Caco-2 (cell line): ENCODE measurements at regions of chr3 and their contacts with region 1.

Region 1: GRCh38 chr3:12994607-12995388 is 78.4 kb downstream of the IQSEC1 start:
- DNase-seq: peak; percentile 88 to 94
- H3K4me3 ChIP-seq: peak overlapping the region; percentile 96
- H3K4me3 Mint-ChIP-seq: peak overlapping the region; percentile 96
- H3K27ac Mint-ChIP-seq: peak overlapping the region; percentile 50
- H3K4me1 ChIP-seq: peaks cover 10% of the 10 kb centered on the region
- H3K4me1 Mint-ChIP-seq: no peaks in the 10 kb centered on the region
- H3K27me3 ChIP-seq: no peaks in the 10 kb centered on the region
- H3K27me3 Mint-ChIP-seq: no peaks in the 10 kb centered on the region
- CTCF ChIP-seq: peak; percentile 85 to 88

Region 2: DNA sequence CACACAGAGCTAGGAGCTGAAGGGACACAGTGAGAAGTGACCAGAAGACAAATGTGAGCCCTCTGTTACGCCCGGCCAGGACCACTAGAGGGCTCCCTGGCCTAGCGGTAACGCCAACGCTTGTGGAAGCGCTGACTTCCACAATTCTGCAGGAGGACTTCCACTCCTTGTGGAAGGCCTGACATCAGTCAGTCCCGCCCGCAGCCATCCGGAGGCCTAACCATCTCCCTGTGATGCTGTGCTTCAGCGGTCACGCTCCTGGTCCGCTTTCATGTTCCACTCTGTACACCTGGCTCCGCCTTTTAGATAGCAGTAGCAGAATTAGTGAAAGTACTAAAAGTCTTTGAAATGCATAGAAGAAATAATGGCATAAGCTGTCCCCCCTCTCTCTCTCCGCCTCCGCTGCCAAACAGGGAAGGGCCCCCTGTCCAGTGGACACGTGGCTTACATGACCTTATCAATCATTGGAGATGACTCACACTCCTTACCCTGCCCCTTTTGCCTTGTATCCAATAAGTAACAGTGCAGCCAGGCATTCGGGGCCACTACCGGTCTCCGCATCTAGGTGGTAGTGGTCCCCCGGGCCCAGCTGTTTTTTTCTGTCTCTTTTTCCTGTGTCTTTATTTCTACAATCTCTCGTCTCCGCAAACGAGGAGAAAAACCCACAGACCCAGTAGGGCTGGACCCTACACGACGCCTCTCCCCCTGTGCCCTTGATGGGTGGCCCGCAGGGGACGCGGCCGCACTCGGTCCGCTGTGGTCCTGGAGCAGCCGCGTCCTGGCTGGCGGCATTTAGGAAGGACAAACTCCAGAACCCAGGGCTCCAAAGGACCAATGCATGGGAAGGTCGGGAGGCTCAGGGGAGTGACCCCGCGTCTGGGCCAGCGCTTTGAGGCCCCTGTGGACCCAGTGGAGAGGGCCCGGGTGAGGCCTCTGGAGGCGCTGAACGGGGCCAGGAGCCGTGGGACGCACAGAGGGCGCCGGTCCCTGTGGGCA is 126.5 kb before region 1 on chr3:
- CTCF ChIA-PET with region 1: no interaction called
- POLR2A ChIA-PET with region 1: no interaction called
- intact Hi-C with region 1: loop called (anchors 1 kb)
- DNase-seq: peak; percentile 84 to 85
- H3K4me3 ChIP-seq: no peak overlapping the region
- H3K4me3 Mint-ChIP-seq: peak overlapping the region; percentile 51
- H3K27ac Mint-ChIP-seq: no peak overlapping the region
- H3K4me1 ChIP-seq: peaks cover 5% of the 10 kb centered on the region; the same call in 1 of the 2 replicates
- H3K4me1 Mint-ChIP-seq: peaks cover 8% of the 10 kb centered on the region
- H3K27me3 ChIP-seq: no peaks in the 10 kb centered on the region
- H3K27me3 Mint-ChIP-seq: no peaks in the 10 kb centered on the region
- CTCF ChIP-seq: peak; percentile 83 to 95

Region 3: GRCh38 chr3:12916159-12916558 is 78.6 kb before region 1 on chr3:
- CTCF ChIA-PET with region 1: no interaction called
- POLR2A ChIA-PET with region 1: no interaction called
- intact Hi-C with region 1: no loop called
- DNase-seq: no peak
- H3K4me3 ChIP-seq: no peak overlapping the region
- H3K4me3 Mint-ChIP-seq: no peak overlapping the region
- H3K27ac Mint-ChIP-seq: no peak overlapping the region
- H3K4me1 ChIP-seq: no peaks in the 10 kb centered on the region
- H3K4me1 Mint-ChIP-seq: no peaks in the 10 kb centered on the region
- H3K27me3 ChIP-seq: no peaks in the 10 kb centered on the region
- H3K27me3 Mint-ChIP-seq: no peaks in the 10 kb centered on the region
- CTCF ChIP-seq: no peak

Region 4: DNA sequence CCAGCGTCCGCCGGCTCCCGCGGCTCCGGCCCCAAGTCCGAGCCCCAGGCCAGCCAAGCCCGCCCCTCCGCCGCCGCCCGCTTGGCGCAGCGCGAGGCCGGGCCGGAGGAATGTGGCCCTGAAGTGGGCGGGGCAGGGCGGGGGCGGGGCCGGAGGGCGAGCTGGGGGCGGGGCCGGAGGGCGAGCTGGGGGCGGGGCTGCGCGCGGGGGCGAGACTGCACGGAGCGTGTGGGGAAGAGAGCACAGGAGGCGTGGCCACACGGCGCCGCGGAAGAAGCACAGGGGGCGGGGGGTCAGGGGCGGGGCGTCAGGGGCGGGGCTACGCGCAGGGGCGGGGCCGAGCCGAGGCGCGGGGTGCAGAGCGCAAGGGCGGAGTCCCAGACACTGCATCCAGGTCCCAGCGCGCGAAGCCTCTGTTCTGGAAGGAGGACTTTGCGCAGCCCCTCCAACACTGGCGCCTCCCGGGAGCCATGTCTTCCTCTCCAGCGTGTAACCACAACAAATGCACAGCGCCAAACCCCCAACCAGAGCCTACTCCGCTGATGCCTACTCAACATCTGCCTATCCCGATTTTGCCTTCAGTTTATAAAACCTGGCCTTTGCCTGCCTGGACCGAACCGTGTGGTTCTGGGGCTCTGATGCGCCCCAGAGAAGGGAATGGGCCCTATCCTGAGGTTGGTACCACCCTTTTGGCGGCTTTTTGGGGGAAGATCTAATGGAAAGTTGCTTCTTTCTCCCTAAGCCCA is 27.0 kb before region 1 on chr3:
- CTCF ChIA-PET with region 1: interaction called, 11 read pairs
- POLR2A ChIA-PET with region 1: no interaction called
- intact Hi-C with region 1: loop called (anchors 1 kb)
- DNase-seq: peak; percentile 88
- H3K4me3 ChIP-seq: peak overlapping the region; percentile 85
- H3K4me3 Mint-ChIP-seq: peak overlapping the region; percentile 95
- H3K27ac Mint-ChIP-seq: no peak overlapping the region
- H3K4me1 ChIP-seq: peaks cover 34% of the 10 kb centered on the region
- H3K4me1 Mint-ChIP-seq: peaks cover 34% of the 10 kb centered on the region
- H3K27me3 ChIP-seq: no peaks in the 10 kb centered on the region
- H3K27me3 Mint-ChIP-seq: no peaks in the 10 kb centered on the region
- CTCF ChIP-seq: no peak